Activated B cell treated with CpG ODN at 0.5 μM for 24 hours (primary cell): ENCODE measurements at regions of chr19 and their contacts with region 1.

Region 1: GRCh38 chr19:55605207-55605636 is 225 bp upstream of the ZNF865 start:
- DNase-seq: peak; percentile 94
- ATAC-seq: peak; percentile 76
- H3K4me3 Mint-ChIP-seq: peak overlapping the region; percentile 93
- H3K27ac Mint-ChIP-seq: peak overlapping the region; percentile 94
- H3K4me1 Mint-ChIP-seq: peaks cover 50% of the 10 kb centered on the region
- H3K27me3 Mint-ChIP-seq: no peaks in the 10 kb centered on the region
- CTCF ChIP-seq: no peak

Region 2: DNA sequence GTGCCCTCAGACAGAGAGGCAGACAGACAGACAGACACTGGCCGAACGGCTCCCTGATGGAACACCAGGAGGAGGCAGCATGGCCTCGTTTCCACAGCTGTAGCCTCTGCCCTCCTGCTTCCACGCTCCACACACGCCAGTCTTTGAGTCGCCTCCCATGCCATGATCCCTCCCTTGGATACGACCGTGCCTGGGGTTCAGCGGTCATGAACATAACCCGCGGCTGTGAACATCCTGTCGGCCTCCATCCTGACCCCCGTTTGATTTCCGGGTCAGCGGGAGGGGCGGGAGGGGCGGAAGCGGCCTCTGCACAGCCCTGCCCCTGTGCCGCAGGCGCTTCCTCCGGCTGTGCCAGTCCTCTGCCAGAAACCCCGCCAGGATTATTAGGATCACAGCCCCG is 590.5 kb before region 1 on chr19:
- CTCF ChIA-PET with region 1: no interaction called
- POLR2A ChIA-PET with region 1: no interaction called
- intact Hi-C with region 1: no loop called
- DNase-seq: no peak
- ATAC-seq: peak; percentile 40
- H3K4me3 Mint-ChIP-seq: peak overlapping the region; percentile 64
- H3K27ac Mint-ChIP-seq: no peak overlapping the region
- H3K4me1 Mint-ChIP-seq: no peaks in the 10 kb centered on the region
- H3K27me3 Mint-ChIP-seq: peaks cover 4% of the 10 kb centered on the region
- CTCF ChIP-seq: no peak

Region 3: GRCh38 chr19:55062734-55063492 is 542.3 kb before region 1 on chr19 and contains the start of gene RDH13:
- CTCF ChIA-PET with region 1: no interaction called
- POLR2A ChIA-PET with region 1: no interaction called
- intact Hi-C with region 1: loop called (anchors 1 kb)
- DNase-seq: peak; percentile 94
- ATAC-seq: peak; percentile 99
- H3K4me3 Mint-ChIP-seq: peak within 1 kb of the TSS; percentile 83
- H3K27ac Mint-ChIP-seq: no peak within 1 kb of the TSS
- H3K4me1 Mint-ChIP-seq: peaks cover 8% of the 10 kb centered on the region
- H3K27me3 Mint-ChIP-seq: peaks cover 19% of the 10 kb centered on the region
- CTCF ChIP-seq: no peak
- total RNA-seq, gene RDH13: 10.3 and 12.4 TPM in 2 replicates

Region 4: DNA sequence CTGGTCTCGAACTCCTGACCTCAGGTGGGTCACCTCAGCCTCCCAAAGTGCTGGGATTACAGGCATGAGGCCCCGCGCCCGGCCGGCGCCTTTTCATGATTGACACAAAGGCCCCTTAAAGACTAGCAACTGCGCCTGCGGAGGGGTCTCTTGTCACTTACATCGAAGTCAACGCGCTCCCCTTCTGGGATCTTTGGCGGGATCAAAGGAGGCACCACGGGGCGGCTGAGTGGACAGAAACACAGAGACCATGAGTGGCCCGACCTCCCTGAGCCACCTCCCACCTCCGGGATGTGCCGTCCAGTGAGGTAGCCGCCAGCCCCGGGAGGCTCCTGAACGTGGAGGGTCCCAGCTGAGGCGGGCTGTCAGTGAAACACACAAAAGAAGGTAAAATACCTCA is 463.5 kb before region 1 on chr19:
- CTCF ChIA-PET with region 1: interaction called, 14 read pairs
- POLR2A ChIA-PET with region 1: no interaction called
- intact Hi-C with region 1: no loop called
- DNase-seq: no peak
- ATAC-seq: no peak
- H3K4me3 Mint-ChIP-seq: no peak overlapping the region
- H3K27ac Mint-ChIP-seq: no peak overlapping the region
- H3K4me1 Mint-ChIP-seq: peaks cover 6% of the 10 kb centered on the region
- H3K27me3 Mint-ChIP-seq: peaks cover 51% of the 10 kb centered on the region
- CTCF ChIP-seq: no peak

Region 5: GRCh38 chr19:55385740-55386529 is 219.3 kb before region 1 on chr19 and contains the start of gene RPL28:
- CTCF ChIA-PET with region 1: no interaction called
- POLR2A ChIA-PET with region 1: interaction called, 4 read pairs
- intact Hi-C with region 1: loop called (anchors 1 kb)
- DNase-seq: peak; percentile 95
- ATAC-seq: peak; percentile 79
- H3K4me3 Mint-ChIP-seq: peak within 1 kb of the TSS; percentile 100
- H3K27ac Mint-ChIP-seq: peak within 1 kb of the TSS; percentile 99
- H3K4me1 Mint-ChIP-seq: peaks cover 67% of the 10 kb centered on the region
- H3K27me3 Mint-ChIP-seq: no peaks in the 10 kb centered on the region
- CTCF ChIP-seq: no peak
- total RNA-seq, gene RPL28: 3,790 and 4,042 TPM in 2 replicates

Region 6: GRCh38 chr19:55516878-55517620 is 88.2 kb before region 1 on chr19:
- CTCF ChIA-PET with region 1: interaction called, 10 read pairs
- POLR2A ChIA-PET with region 1: interaction called, 7 read pairs
- intact Hi-C with region 1: loop called (anchors 1 kb)
- DNase-seq: peak; percentile 92
- ATAC-seq: peak; percentile 100
- H3K4me3 Mint-ChIP-seq: peak overlapping the region; percentile 76
- H3K27ac Mint-ChIP-seq: peak overlapping the region; percentile 87
- H3K4me1 Mint-ChIP-seq: peaks cover 3% of the 10 kb centered on the region
- H3K27me3 Mint-ChIP-seq: peaks cover 10% of the 10 kb centered on the region
- CTCF ChIP-seq: no peak

Region 7: DNA sequence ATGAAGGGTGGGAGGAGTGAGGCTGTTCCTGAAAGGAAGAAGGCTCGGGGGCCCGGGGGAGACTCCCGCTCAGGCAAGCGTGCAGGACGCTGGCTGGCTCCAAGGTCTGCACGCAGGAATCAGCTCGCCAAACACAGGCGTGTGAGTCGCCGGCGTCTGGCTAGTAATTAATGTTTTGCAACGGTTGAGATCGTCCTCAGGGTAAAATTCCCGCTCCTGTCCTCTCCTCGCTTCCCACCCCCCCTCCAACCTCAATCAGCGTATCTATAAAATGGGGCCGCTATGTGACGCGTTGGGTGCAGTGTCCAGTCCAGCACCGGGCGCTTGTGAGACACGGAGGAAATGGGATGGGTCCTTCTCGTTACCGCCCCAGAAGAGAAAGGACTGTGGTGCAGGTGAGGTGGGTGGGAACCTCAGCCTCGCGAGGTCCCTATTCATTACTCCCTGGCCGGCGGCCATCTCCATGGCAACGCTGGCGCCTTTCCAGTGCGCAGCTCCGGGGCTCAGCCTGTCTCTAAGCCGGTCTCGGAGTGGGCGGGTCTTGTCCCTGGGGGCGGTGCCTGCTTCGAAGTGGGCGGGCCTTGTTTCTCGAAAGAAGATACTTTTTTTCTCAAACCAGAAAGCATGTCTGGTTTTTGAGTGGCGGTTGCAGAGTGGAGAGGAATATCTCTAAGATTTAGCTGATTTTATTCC is 18.1 kb before region 1 on chr19:
- CTCF ChIA-PET with region 1: no interaction called
- POLR2A ChIA-PET with region 1: interaction called, 42 read pairs
- intact Hi-C with region 1: loop called (anchors 1 kb)
- DNase-seq: peak; percentile 89
- ATAC-seq: peak; percentile 96
- H3K4me3 Mint-ChIP-seq: peak overlapping the region; percentile 85
- H3K27ac Mint-ChIP-seq: peak overlapping the region; percentile 72
- H3K4me1 Mint-ChIP-seq: peaks cover 29% of the 10 kb centered on the region
- H3K27me3 Mint-ChIP-seq: no peaks in the 10 kb centered on the region
- CTCF ChIP-seq: no peak

Region 8: GRCh38 chr19:55624109-55625003 is 19.1 kb after region 1 on chr19 and contains the start of gene ZNF784:
- CTCF ChIA-PET with region 1: interaction called, 7 read pairs
- POLR2A ChIA-PET with region 1: interaction called, 27 read pairs
- intact Hi-C with region 1: loop called (anchors 1 kb)
- DNase-seq: peak; percentile 93
- ATAC-seq: peak; percentile 85
- H3K4me3 Mint-ChIP-seq: peak within 1 kb of the TSS; percentile 94
- H3K27ac Mint-ChIP-seq: peak within 1 kb of the TSS; percentile 97
- H3K4me1 Mint-ChIP-seq: peaks cover 17% of the 10 kb centered on the region
- H3K27me3 Mint-ChIP-seq: no peaks in the 10 kb centered on the region
- CTCF ChIP-seq: no peak
- total RNA-seq, gene ZNF784: 8.7 and 8.9 TPM in 2 replicates